ENCODE measurements at regions of chr3 and their contacts with region 1.

Region 1: DNA sequence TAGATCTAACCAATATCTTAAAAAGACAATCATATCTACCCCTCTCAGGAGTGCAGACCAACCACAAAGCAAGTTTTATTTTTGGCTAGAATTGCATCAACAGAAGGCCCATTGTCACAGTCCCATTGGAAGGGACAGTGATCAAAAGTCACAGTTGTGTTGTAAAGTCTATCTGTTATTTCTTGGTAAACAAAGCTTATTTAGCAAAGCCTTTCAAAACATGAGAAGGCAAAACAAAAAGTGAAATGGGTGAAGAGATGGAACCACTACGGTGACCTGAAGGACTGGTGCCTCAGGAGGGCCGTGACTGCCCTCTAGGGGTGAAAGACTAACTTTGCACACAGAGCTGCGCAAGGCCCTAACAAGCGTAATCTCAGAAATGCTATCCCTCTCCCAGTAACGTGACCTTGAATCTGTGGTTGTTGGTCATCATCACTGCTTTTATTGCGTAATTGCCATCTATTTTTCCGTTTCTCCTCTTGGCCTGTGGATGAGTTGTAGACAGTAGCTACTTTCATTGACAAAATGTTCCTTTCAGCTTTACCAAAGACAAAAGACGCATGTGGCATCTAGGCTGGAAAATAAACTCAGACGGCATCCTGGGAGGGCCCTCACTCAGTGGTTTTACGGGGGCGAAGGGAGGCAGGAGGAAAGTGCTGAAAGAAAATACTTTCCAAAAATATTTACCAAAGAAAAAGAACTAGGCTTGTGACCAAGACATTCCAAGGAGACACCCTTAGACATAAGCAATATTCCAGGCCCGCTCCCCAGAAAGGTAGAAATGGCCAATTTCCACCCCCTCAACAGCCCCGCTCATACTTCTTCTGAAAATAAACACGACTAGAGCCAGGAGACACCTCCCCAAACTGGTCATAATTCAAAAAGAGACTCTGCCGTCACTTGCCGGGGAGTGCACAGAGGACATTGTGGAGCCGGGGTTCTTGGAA is 79.4 kb downstream of the FRMD4B start:
- DNase-seq: peak; percentile 46 to 75 (median 51)
- H3K4me3 ChIP-seq: no peak overlapping the region
- H3K4me3 Mint-ChIP-seq: no peak overlapping the region
- H3K27ac ChIP-seq: no peak overlapping the region
- H3K27ac Mint-ChIP-seq: peak overlapping the region in 3 of 8 donors; percentile 13 to 38 (median 30)
- H3K4me1 ChIP-seq: peaks cover 3% of the 10 kb centered on the region
- H3K4me1 Mint-ChIP-seq: peaks cover 7% of the 10 kb centered on the region in 3 donors
- H3K27me3 ChIP-seq: no peaks in the 10 kb centered on the region
- H3K27me3 Mint-ChIP-seq: peaks cover 0 to 2% of the 10 kb centered on the region in 2 donors

Region 2: GRCh38 chr3:69108811-69109210 is 197.7 kb before region 1 on chr3:
- CTCF ChIA-PET with region 1: no interaction called
- POLR2A ChIA-PET with region 1: no interaction called
- DNase-seq: no peak
- H3K4me3 ChIP-seq: no peak overlapping the region
- H3K4me3 Mint-ChIP-seq: no peak overlapping the region
- H3K27ac ChIP-seq: no peak overlapping the region
- H3K27ac Mint-ChIP-seq: peak overlapping the region in 4 of 8 donors; percentile 17 to 64 (median 28)
- H3K4me1 ChIP-seq: peaks cover 7% of the 10 kb centered on the region
- H3K4me1 Mint-ChIP-seq: peaks cover 6 to 43% (median 12%) of the 10 kb centered on the region in 3 donors
- H3K27me3 ChIP-seq: no peaks in the 10 kb centered on the region
- H3K27me3 Mint-ChIP-seq: no peaks in the 10 kb centered on the region

Region 3: GRCh38 chr3:69120879-69121464 is 185.5 kb before region 1 on chr3:
- CTCF ChIA-PET with region 1: interaction called, 17 read pairs
- POLR2A ChIA-PET with region 1: no interaction called
- DNase-seq: peak; percentile 68 to 85 (median 71)
- H3K4me3 ChIP-seq: no peak overlapping the region
- H3K4me3 Mint-ChIP-seq: no peak overlapping the region
- H3K27ac ChIP-seq: no peak overlapping the region
- H3K27ac Mint-ChIP-seq: no peak overlapping the region
- H3K4me1 ChIP-seq: no peaks in the 10 kb centered on the region
- H3K4me1 Mint-ChIP-seq: peaks cover 4 to 7% (median 7%) of the 10 kb centered on the region in 3 donors
- H3K27me3 ChIP-seq: no peaks in the 10 kb centered on the region
- H3K27me3 Mint-ChIP-seq: peaks cover 0 to 4% of the 10 kb centered on the region in 2 donors

Region 4: DNA sequence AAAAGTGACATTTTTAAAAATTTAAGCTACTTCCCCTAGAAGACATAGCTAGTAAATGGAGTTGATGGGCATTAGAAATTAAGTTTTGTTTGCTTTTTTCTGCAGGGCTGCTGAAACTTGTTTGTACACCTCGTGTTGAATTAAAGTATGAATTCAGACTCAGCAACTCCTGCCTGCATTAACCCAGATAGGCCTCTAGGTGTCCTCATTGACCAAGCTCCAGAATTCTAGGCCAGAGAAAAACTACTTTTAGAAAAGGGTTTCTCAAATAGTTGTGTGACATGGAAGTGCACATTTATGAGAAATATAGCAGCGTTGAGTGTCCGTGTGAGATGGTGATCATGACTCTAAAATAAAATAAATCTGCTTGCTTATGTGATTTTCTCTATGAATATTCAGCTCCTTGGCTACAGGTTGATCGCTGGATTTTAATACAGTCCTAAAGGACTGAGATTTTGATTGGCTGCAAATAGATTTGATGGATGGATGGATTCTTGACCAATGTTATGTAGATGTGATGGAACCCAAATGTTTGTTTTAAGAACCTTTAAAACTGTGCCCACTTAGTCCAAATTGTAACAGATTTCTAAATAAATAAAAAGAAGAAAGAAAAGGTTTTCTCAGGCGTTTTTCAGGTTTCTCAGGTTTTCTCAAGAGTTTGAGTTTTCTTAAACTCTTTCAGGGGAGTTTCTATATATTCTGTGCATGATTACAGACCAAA is 144.8 kb before region 1 on chr3:
- CTCF ChIA-PET with region 1: interaction called, 244 read pairs
- POLR2A ChIA-PET with region 1: no interaction called
- DNase-seq: peak in 4 of 5 donors; percentile 6 to 56 (median 44)
- H3K4me3 ChIP-seq: no peak overlapping the region
- H3K4me3 Mint-ChIP-seq: no peak overlapping the region
- H3K27ac ChIP-seq: no peak overlapping the region
- H3K27ac Mint-ChIP-seq: peak overlapping the region in 1 of 8 donors; percentile 5
- H3K4me1 ChIP-seq: no peaks in the 10 kb centered on the region
- H3K4me1 Mint-ChIP-seq: peaks cover 3 to 9% (median 4%) of the 10 kb centered on the region in 3 donors
- H3K27me3 ChIP-seq: no peaks in the 10 kb centered on the region
- H3K27me3 Mint-ChIP-seq: peaks cover 8 to 11% of the 10 kb centered on the region in 2 donors

Region 5: GRCh38 chr3:69174871-69175737 is 131.4 kb before region 1 on chr3:
- CTCF ChIA-PET with region 1: interaction called, 10 read pairs
- POLR2A ChIA-PET with region 1: no interaction called
- DNase-seq: no peak
- H3K4me3 ChIP-seq: no peak overlapping the region
- H3K4me3 Mint-ChIP-seq: no peak overlapping the region
- H3K27ac ChIP-seq: no peak overlapping the region
- H3K27ac Mint-ChIP-seq: no peak overlapping the region
- H3K4me1 ChIP-seq: no peaks in the 10 kb centered on the region
- H3K4me1 Mint-ChIP-seq: peaks cover 8 to 11% (median 10%) of the 10 kb centered on the region in 3 donors
- H3K27me3 ChIP-seq: no peaks in the 10 kb centered on the region
- H3K27me3 Mint-ChIP-seq: peaks cover 0 to 1% of the 10 kb centered on the region in 2 donors

Region 6: DNA sequence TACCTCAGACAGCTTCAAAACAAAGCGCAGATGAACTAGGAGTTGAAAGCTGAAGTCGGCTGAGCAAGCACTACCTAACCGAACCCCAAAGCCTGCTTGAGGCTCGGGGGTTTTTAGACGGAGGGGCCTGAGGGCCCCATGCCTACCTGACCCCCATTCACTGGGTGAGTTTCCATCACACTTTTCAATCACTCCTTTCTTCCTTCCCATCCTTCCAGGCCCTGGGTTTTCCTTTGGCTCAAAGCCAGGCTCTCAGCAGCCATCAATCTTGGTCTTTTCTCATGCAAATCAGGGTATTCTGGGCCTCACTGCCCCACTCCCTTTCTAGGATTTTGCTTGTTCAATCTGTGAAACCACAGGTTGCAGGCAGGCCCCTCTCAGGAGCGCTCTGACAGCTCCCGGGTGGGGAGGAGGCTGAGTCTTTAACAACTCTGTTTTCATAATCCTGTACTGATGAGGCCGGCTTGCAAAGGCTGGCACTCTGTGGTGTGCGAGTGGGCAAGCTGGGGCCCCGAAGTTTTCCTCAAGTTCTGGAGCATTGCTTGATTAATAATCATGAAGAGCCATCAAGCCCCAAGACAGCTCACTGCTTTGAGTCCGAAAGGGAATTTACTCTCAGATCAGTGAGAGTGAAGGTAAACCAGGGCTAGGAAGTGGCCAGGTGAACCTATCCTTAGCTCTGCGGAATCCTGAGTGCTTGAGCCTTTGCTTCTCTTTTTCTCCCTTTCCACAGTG is 18.2 kb before region 1 on chr3:
- CTCF ChIA-PET with region 1: interaction called, 12 read pairs
- POLR2A ChIA-PET with region 1: no interaction called
- DNase-seq: peak in 1 of 5 donors; percentile 4
- H3K4me3 ChIP-seq: no peak overlapping the region
- H3K4me3 Mint-ChIP-seq: peak overlapping the region in 6 of 7 donors; percentile 15 to 84 (median 54)
- H3K27ac ChIP-seq: no peak overlapping the region
- H3K27ac Mint-ChIP-seq: peak overlapping the region in 6 of 8 donors; percentile 62 to 78 (median 73)
- H3K4me1 ChIP-seq: peaks cover 7% of the 10 kb centered on the region
- H3K4me1 Mint-ChIP-seq: peaks cover 15 to 36% (median 29%) of the 10 kb centered on the region in 3 donors
- H3K27me3 ChIP-seq: no peaks in the 10 kb centered on the region
- H3K27me3 Mint-ChIP-seq: no peaks in the 10 kb centered on the region

Region 7: GRCh38 chr3:69320871-69321271 is 14.4 kb after region 1 on chr3:
- CTCF ChIA-PET with region 1: interaction called, 18 read pairs
- POLR2A ChIA-PET with region 1: no interaction called
- DNase-seq: no peak
- H3K4me3 ChIP-seq: no peak overlapping the region
- H3K4me3 Mint-ChIP-seq: no peak overlapping the region
- H3K27ac ChIP-seq: no peak overlapping the region
- H3K27ac Mint-ChIP-seq: peak overlapping the region in 1 of 8 donors; percentile 74
- H3K4me1 ChIP-seq: no peaks in the 10 kb centered on the region
- H3K4me1 Mint-ChIP-seq: no peaks in the 10 kb centered on the region
- H3K27me3 ChIP-seq: no peaks in the 10 kb centered on the region
- H3K27me3 Mint-ChIP-seq: no peaks in the 10 kb centered on the region

Region 8: DNA sequence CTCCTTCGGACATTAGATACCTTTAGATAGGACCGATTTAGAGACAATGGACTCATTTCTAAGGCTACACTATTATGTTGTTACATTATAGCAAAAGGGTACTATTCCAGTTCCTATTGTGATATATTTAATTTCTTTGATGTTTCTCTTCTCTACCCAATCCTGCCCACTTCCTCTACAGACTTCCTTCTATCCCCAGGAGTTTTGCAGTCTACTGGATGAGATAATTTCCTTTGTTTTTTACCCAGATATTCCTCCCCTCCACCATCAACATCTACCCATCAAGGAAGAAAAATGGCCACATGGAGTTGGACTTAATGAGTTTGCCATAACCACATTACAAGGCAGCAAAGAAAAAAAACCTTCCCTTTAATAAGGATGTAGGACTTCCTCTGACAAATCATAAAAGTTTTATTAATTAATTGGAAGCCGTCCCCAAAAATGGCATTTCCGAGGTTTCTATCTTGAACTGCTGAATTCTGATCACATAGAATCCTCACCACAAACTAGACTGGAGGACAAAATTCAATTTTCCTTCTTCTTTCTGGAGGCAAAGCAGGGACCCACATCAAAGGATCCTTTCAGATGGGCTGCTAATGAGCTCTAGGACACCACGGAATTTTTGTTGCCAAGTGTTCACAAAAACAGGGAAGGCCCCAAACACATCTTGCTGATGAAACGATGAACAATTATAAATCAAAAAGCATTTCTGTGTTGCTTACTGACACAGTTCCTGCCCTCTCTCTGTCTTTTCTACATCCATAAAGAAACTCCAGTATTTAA is 46.0 kb after region 1 on chr3:
- CTCF ChIA-PET with region 1: no interaction called
- POLR2A ChIA-PET with region 1: no interaction called
- DNase-seq: no peak
- H3K4me3 ChIP-seq: no peak overlapping the region
- H3K4me3 Mint-ChIP-seq: no peak overlapping the region
- H3K27ac ChIP-seq: no peak overlapping the region
- H3K27ac Mint-ChIP-seq: no peak overlapping the region
- H3K4me1 ChIP-seq: peaks cover 4% of the 10 kb centered on the region
- H3K4me1 Mint-ChIP-seq: peaks cover 9% of the 10 kb centered on the region in 3 donors
- H3K27me3 ChIP-seq: no peaks in the 10 kb centered on the region
- H3K27me3 Mint-ChIP-seq: peaks cover 10 to 27% of the 10 kb centered on the region in 2 donors

Measured in CD8-positive, alpha-beta memory T cell (primary cell).